ENCODE measurements at regions of chr20 and their contacts with region 1.

Region 1: GRCh38 chr20:44187051-44187762 is at the start of gene JPH2:
- DNase-seq: no peak
- H3K4me3 ChIP-seq: peak within 1 kb of the TSS; percentile 27 to 31
- H3K27ac ChIP-seq: peak within 1 kb of the TSS; percentile 62 to 66
- H3K4me1 ChIP-seq: peaks cover 8% of the 10 kb centered on the region
- H3K27me3 ChIP-seq: peaks cover 2% of the 10 kb centered on the region
- CTCF ChIP-seq: no peak
- POLR2A ChIP-seq: no peak
- total RNA-seq, gene JPH2: 29.1 to 31.1 TPM

Region 2: GRCh38 chr20:43558412-43559146 is 628.6 kb before region 1 on chr20 and contains the start of gene SGK2:
- intact Hi-C with region 1: no loop called
- DNase-seq: no peak
- H3K4me3 ChIP-seq: no peak within 1 kb of the TSS
- H3K27ac ChIP-seq: no peak within 1 kb of the TSS
- H3K4me1 ChIP-seq: no peaks in the 10 kb centered on the region
- H3K27me3 ChIP-seq: no peaks in the 10 kb centered on the region
- CTCF ChIP-seq: no peak
- POLR2A ChIP-seq: no peak
- total RNA-seq, gene SGK2: 0.68 to 4.5 TPM

Region 3: GRCh38 chr20:44115762-44116644 is 71.2 kb before region 1 on chr20:
- intact Hi-C with region 1: loop called (anchors 2 kb)
- DNase-seq: no peak
- H3K4me3 ChIP-seq: no peak overlapping the region
- H3K27ac ChIP-seq: no peak overlapping the region
- H3K4me1 ChIP-seq: no peaks in the 10 kb centered on the region
- H3K27me3 ChIP-seq: no peaks in the 10 kb centered on the region
- CTCF ChIP-seq: no peak
- POLR2A ChIP-seq: no peak

Region 4: GRCh38 chr20:44137210-44137801 is 49.9 kb before region 1 on chr20:
- intact Hi-C with region 1: loop called (anchors 5 kb)
- DNase-seq: no peak
- H3K4me3 ChIP-seq: no peak overlapping the region
- H3K27ac ChIP-seq: peak overlapping the region; percentile 41 to 61
- H3K4me1 ChIP-seq: no peaks in the 10 kb centered on the region
- H3K27me3 ChIP-seq: no peaks in the 10 kb centered on the region
- CTCF ChIP-seq: no peak
- POLR2A ChIP-seq: no peak